ENCODE measurements at regions of chr4 and their contacts with region 1.

Region 1: DNA sequence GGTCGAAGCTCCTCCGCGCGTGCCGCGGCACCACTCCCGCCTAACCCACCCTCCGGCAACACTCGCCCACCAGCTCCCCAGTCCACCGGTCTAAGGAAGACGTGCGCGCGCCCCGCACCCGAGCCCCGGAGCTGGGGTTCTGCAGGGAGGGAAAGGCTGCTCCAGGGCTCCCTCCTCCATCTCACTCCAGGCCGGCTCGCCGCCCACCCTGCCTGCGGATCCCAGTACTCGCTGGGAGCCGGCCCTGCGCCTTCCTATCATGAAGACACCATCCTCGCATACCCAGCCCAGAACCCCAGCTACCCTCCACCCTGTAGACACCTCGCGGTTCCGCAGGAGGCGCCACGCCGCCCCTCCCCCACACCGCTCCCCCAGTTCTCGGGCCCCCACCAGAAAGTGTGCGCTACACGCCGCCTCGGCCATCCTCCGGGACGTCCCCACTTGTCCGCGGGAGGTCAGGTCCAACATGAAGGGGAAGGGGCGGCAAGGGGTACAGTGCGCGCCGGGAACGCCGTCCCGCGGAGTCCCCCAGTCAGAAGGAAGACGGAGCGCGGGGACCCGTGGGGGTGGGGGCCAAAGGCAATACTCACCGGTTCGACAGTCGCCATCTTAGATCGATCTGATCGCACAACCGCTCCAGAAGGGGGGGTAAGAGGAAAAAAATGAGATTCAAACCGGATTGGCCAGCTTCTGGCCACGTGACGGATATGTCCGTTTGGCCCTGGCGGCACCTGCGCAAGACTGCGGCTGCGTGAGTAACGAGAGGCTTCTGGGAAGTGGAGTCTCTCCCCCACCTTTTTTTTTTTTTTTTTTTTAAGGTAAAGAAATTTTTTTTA is at the start of gene EIF4E:
- DNase-seq: peak; percentile 98
- H3K4me3 Mint-ChIP-seq: peak within 1 kb of the TSS; percentile 88
- H3K27ac Mint-ChIP-seq: peak within 1 kb of the TSS; percentile 99
- H3K4me1 Mint-ChIP-seq: peaks cover 35% of the 10 kb centered on the region
- H3K27me3 Mint-ChIP-seq: no peaks in the 10 kb centered on the region
- total RNA-seq, gene EIF4E: 121 to 124 TPM

Region 2: DNA sequence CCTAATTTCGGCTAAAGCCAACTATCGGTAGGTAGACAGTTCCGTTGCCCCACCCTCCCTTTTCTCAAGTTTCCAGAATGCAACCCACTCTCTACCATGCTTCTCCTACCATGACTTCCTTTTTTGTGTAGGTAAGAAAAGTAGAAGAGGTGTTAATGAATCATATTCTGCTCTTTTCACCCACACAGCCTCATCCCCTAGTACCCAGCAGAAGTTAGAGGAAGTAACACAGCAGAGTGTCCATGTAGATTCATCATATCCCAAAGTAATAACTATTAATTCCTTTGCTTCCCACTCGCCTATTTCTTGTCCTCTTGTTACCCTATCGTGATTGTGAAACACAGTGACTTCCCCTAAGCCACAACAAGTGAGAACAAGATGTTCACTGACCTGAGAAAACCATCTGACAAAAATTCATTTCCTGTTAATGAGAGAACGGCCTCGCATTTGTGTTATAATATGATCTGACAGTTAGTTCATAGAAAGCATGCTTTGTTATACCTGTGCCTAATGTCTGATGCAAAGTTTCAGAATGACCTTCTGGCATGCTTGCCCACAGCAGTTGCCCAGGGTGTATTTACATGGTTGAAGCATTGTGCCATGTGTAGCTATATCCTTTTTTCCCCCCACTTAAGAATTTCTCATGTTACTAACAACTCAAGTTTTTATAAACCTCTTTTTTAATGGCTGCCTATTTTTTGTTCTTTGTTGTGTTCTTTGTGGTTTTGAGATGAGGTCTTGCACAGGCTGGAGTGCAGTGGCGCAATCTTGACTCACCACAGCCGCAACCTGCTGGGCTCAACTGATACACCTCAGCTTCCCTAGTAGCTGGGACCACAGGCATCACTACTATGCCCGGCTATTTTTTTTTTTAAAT is 482.0 kb before region 1 on chr4:
- CTCF ChIA-PET with region 1: interaction called, 4 read pairs
- POLR2A ChIA-PET with region 1: no interaction called
- intact Hi-C with region 1: loop called (anchors 1 kb)
- DNase-seq: peak; percentile 81
- H3K4me3 Mint-ChIP-seq: peak overlapping the region; percentile 48
- H3K27ac Mint-ChIP-seq: peak overlapping the region; percentile 87
- H3K4me1 Mint-ChIP-seq: peaks cover 35% of the 10 kb centered on the region
- H3K27me3 Mint-ChIP-seq: no peaks in the 10 kb centered on the region

Region 3: GRCh38 chr4:98601708-98602107 is 327.0 kb before region 1 on chr4:
- CTCF ChIA-PET with region 1: no interaction called
- POLR2A ChIA-PET with region 1: interaction called, 5 read pairs
- intact Hi-C with region 1: loop called (anchors 1 kb)
- DNase-seq: peak; percentile 54
- H3K4me3 Mint-ChIP-seq: peak overlapping the region; percentile 54
- H3K27ac Mint-ChIP-seq: peak overlapping the region; percentile 82
- H3K4me1 Mint-ChIP-seq: peaks cover 55% of the 10 kb centered on the region
- H3K27me3 Mint-ChIP-seq: no peaks in the 10 kb centered on the region

Region 4: GRCh38 chr4:98864560-98864959 is 64.2 kb before region 1 on chr4:
- CTCF ChIA-PET with region 1: interaction called, 3 read pairs
- POLR2A ChIA-PET with region 1: no interaction called
- intact Hi-C with region 1: loop called (anchors 1 kb)
- DNase-seq: peak; percentile 79
- H3K4me3 Mint-ChIP-seq: no peak overlapping the region
- H3K27ac Mint-ChIP-seq: peak overlapping the region; percentile 42
- H3K4me1 Mint-ChIP-seq: peaks cover 13% of the 10 kb centered on the region
- H3K27me3 Mint-ChIP-seq: no peaks in the 10 kb centered on the region

Region 5: GRCh38 chr4:98963538-98964433 is 35.1 kb after region 1 on chr4:
- CTCF ChIA-PET with region 1: no interaction called
- POLR2A ChIA-PET with region 1: no interaction called
- intact Hi-C with region 1: no loop called
- DNase-seq: no peak
- H3K4me3 Mint-ChIP-seq: no peak overlapping the region
- H3K27ac Mint-ChIP-seq: no peak overlapping the region
- H3K4me1 Mint-ChIP-seq: peaks cover 7% of the 10 kb centered on the region
- H3K27me3 Mint-ChIP-seq: no peaks in the 10 kb centered on the region

Region 6: GRCh38 chr4:99405433-99406115 is 476.9 kb after region 1 on chr4:
- CTCF ChIA-PET with region 1: no interaction called
- POLR2A ChIA-PET with region 1: no interaction called
- intact Hi-C with region 1: loop called (anchors 10 kb)
- DNase-seq: peak; percentile 66
- H3K4me3 Mint-ChIP-seq: no peak overlapping the region
- H3K27ac Mint-ChIP-seq: no peak overlapping the region
- H3K4me1 Mint-ChIP-seq: peaks cover 18% of the 10 kb centered on the region
- H3K27me3 Mint-ChIP-seq: peaks cover 2% of the 10 kb centered on the region

Region 7: DNA sequence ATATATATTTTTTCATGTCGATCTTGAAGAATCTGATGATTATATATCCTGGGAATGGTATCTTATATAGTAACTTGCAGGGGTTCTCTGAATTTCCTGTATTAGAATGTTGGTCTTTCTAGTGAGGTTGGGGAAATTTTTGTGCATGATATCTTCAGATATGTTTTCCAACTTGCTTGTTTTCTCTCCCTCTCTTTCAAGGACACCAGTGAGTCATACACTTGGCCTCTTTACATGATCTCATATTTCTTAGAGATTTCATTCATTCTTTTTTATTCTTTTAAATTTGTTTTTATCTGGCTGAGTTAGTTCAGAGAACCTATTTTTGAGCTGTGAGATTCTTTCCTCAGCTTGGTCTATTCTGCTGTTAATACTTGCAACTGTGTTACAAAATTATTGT is 554.9 kb after region 1 on chr4:
- CTCF ChIA-PET with region 1: no interaction called
- POLR2A ChIA-PET with region 1: no interaction called
- intact Hi-C with region 1: no loop called
- DNase-seq: no peak
- H3K4me3 Mint-ChIP-seq: no peak overlapping the region
- H3K27ac Mint-ChIP-seq: no peak overlapping the region
- H3K4me1 Mint-ChIP-seq: no peaks in the 10 kb centered on the region
- H3K27me3 Mint-ChIP-seq: peaks cover 1% of the 10 kb centered on the region

Region 8: DNA sequence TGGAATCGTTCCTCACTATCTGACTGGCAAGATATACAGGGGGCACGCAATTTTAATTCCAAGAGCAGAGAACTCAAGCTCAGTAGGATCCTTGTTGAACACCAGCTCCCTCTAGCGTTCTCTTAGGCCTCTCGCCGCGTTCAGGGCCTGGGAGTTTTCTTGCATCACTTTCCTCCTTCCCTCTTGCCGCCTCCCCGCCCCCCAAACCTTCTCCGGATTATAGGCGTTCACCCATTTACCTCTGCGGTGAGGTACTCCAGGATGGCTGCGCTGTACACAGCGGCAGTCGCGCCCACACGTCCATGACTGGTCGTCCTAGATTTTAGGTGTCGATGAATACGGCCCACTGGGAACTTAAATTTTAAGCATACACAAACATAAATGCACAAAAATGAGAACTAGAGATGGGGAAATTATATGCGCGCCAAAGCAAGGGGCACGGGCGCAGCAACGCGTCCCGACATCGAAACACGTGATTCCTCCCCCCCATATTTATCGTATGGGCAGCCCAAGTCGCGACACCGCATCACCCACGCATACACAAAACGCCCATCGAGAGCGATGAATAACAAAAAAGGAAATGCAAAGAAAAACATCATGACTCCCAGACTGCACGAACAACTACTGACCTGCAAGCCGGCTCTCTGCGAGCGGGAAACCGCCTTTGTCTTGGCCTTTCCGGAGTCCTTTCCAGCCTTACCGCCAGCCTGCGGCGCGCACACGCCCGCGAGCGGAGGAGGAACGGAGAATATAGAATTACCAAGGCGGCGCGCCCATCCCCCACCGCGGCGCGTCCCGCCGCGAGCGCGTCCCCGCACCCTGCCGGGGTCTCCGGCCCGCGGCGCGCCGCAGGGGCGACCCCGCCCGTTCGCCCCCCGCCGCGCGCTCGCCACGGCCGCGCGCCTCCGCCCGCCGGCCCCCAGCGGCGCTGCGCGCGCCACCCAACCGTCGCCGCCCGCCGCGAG is 1020.6 kb after region 1 on chr4:
- CTCF ChIA-PET with region 1: no interaction called
- POLR2A ChIA-PET with region 1: no interaction called
- intact Hi-C with region 1: loop called (anchors 1 kb)
- DNase-seq: peak; percentile 95
- H3K4me3 Mint-ChIP-seq: no peak overlapping the region
- H3K27ac Mint-ChIP-seq: no peak overlapping the region
- H3K4me1 Mint-ChIP-seq: peaks cover 35% of the 10 kb centered on the region
- H3K27me3 Mint-ChIP-seq: no peaks in the 10 kb centered on the region

Measured in activated CD4-positive, alpha-beta memory T cell treated with anti-CD3 and anti-CD28 coated beads for 36 hours (primary cell).